GM12878 (cell line): ENCODE measurements at regions of chr6 and their contacts with region 1.

Region 1: DNA sequence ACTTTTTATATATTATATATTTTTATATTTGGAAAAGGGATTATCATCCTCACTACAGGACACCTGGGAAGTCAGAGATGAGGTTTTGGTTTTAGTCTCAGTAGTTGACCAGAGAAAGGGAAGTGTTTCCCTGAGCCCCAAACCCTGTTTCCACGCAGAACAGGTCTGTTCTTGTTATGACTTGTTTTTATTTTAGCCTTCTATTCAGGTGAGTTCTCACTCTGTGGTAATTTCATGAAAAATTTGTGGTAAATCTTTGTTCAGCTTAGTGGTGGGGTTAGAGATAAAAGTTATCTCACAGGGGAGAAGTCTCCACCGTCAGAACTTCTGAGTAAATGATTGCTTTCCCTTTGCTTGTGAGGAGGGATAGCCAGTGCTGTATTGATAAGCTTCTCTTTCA is 224.9 kb downstream of the FARS2 start:
- DNase-seq: peak; percentile 64
- ATAC-seq: peak; percentile 94
- H3K4me3 ChIP-seq: 0 out of 2 replicates have a peak overlapping the region, but pooled peaks have one; percentile 42
- H3K27ac ChIP-seq: peak overlapping the region; percentile 49
- H3K4me1 ChIP-seq: peaks cover 20% of the 10 kb centered on the region
- H3K27me3 ChIP-seq: no peaks in the 10 kb centered on the region
- CTCF ChIP-seq: no peak
- EP300 ChIP-seq: peak in 1 of 2 experiments; percentile 62; a peak in 1 of 4 replicates
- POLR2A ChIP-seq: no peak
- RAD21 ChIP-seq: 0 out of 2 replicates have a peak, but pooled peaks have one; percentile 10

Region 2: DNA sequence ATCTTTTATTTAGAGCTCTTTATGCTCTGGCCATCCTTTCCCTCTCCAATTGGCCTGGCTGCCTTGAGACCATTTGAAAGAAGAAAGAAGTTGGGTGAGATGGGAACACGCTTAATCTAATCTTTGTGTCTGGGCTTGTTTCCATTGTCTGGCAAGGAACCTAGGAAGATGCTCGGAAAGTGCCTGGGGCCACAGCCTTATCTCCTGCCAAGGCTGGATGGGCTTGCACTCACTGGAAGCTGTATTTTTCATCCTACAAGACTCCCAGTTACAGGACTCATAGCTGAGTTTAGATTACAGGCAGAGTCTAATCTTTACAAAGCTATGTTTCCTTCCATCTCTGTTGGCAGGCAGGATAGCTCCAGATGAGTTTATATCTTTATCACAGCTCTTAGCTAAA is 743.2 kb before region 1 on chr6:
- CTCF ChIA-PET with region 1: no interaction called
- POLR2A ChIA-PET with region 1: no interaction called
- RAD21 ChIA-PET with region 1: no interaction called
- SMC1A ChIA-PET with region 1: no interaction called
- in situ Hi-C with region 1: no loop called
- intact Hi-C with region 1: no loop called
- DNase-seq: no peak
- ATAC-seq: no peak
- H3K4me3 ChIP-seq: no peak overlapping the region
- H3K27ac ChIP-seq: no peak overlapping the region
- H3K4me1 ChIP-seq: no peaks in the 10 kb centered on the region
- H3K27me3 ChIP-seq: peaks cover 0 to 4% of the 10 kb centered on the region in 2 experiments; a peak in 1 of 4 replicates
- CTCF ChIP-seq: no peak
- EP300 ChIP-seq: no peak
- POLR2A ChIP-seq: no peak
- RAD21 ChIP-seq: no peak

Region 3: DNA sequence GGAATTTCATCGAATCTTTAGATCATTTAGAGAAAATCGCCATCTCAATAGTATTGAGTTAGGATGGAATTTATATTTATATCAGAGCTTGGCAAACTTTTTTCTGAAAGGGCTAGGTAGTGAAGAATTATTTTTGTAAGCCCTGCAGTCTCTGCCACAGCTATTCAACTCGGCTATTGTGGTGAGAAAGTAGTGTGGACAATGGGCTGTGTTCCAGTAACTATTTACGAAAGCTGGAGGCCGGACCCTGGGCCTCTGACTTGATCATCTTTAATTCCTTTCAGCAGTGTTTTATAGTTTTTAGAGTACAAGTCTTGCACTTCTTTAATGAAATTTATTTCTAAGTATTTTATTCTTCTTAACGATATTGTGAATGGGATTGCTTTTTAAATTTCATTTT is 23.4 kb before region 1 on chr6:
- CTCF ChIA-PET with region 1: no interaction called
- POLR2A ChIA-PET with region 1: no interaction called
- RAD21 ChIA-PET with region 1: no interaction called
- SMC1A ChIA-PET with region 1: no interaction called
- in situ Hi-C with region 1: no loop called
- intact Hi-C with region 1: no loop called
- DNase-seq: no peak
- ATAC-seq: no peak
- H3K4me3 ChIP-seq: no peak overlapping the region
- H3K27ac ChIP-seq: no peak overlapping the region
- H3K4me1 ChIP-seq: no peaks in the 10 kb centered on the region
- H3K27me3 ChIP-seq: no peaks in the 10 kb centered on the region
- CTCF ChIP-seq: no peak
- EP300 ChIP-seq: no peak
- POLR2A ChIP-seq: no peak
- RAD21 ChIP-seq: no peak

Region 4: DNA sequence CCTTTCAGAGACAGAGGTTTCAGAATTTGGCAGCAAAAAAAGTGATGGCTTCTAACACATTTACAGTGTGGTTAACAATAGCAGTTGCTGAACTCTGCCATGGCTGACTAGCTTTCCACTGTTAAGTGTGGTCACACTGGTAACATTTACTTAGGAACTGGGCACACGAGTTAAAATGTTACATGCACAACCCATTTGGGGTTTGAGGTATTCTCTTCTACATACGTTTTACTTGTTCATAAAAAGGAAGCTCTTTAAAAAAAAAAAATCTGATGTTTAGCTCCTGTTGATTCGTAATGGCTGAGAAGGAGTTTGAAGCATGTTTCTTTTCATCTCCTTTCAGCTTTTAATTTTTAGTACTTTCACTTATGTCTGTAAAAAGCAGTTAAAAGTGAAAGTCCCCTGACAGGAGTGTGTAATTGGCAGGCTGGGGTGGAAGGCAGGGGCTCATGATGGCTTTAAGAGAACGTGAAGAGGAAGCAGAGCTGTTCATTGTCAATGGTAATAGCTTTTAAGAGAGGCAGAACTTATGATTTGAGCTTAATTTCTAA is 21.0 kb after region 1 on chr6:
- CTCF ChIA-PET with region 1: interaction called, 21 read pairs
- POLR2A ChIA-PET with region 1: interaction called, 8 read pairs
- RAD21 ChIA-PET with region 1: interaction called, 27 read pairs
- SMC1A ChIA-PET with region 1: interaction called, 72 read pairs
- in situ Hi-C with region 1: no loop called
- intact Hi-C with region 1: loop called (anchors 1 kb)
- DNase-seq: peak; percentile 92
- ATAC-seq: peak; percentile 94
- H3K4me3 ChIP-seq: peak overlapping the region; percentile 60
- H3K27ac ChIP-seq: peak overlapping the region; percentile 88
- H3K4me1 ChIP-seq: peaks cover 26% of the 10 kb centered on the region
- H3K27me3 ChIP-seq: no peaks in the 10 kb centered on the region
- CTCF ChIP-seq: no peak
- EP300 ChIP-seq: peak in 1 of 2 experiments; percentile 85; a peak in 3 of 4 replicates
- POLR2A ChIP-seq: no peak
- RAD21 ChIP-seq: no peak

Region 5: GRCh38 chr6:5619249-5619648 is 133.0 kb after region 1 on chr6:
- CTCF ChIA-PET with region 1: no interaction called
- POLR2A ChIA-PET with region 1: no interaction called
- RAD21 ChIA-PET with region 1: no interaction called
- SMC1A ChIA-PET with region 1: no interaction called
- in situ Hi-C with region 1: no loop called
- intact Hi-C with region 1: no loop called
- DNase-seq: peak; percentile 17
- ATAC-seq: peak; percentile 78
- H3K4me3 ChIP-seq: no peak overlapping the region
- H3K27ac ChIP-seq: peak overlapping the region; percentile 27; the same call in 1 of the 2 replicates
- H3K4me1 ChIP-seq: peaks cover 4% of the 10 kb centered on the region; the same call in 1 of the 2 replicates
- H3K27me3 ChIP-seq: no peaks in the 10 kb centered on the region
- CTCF ChIP-seq: no peak
- EP300 ChIP-seq: no peak
- POLR2A ChIP-seq: peak; percentile 67; the same call in 1 of the 2 replicates
- RAD21 ChIP-seq: no peak

Region 6: DNA sequence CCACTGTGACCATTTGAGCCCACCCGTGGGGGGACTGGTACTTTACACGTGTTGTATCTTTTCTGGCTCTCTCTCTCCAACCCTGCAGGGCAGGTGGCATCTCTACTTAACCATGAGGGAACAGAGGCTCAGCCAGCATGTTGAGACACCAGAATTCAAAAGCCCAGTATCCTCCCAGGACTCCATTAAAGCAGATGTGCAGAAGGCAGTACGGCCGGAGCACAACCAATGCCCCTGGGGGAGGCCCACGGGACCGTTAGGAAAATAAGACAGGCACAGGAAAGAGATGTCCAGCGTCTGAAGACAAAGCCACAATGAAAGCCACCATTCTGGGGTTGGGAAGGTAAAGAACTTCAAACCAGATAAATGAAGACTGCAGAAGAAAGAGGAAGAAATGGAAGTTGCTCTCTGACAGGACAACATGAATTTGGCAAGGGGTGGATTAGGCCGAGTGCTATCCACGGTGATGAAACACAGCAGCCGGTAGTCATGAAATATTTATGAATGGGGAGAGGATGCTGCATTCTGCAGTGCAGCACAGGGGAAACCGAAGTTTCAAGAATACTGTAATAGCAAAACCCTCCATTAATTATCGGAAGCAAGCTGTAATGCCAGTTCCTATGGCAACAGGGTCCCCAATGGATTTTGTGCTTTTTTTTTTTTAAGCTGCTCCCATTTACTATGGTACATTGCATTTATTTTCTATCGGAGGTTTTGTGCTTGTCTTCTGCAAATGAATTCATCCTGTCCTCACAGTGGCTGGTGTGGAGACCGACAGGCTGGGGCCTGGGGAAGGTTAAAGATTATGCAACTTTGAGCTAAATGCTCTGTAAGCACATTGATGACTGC is 341.1 kb after region 1 on chr6:
- CTCF ChIA-PET with region 1: no interaction called
- POLR2A ChIA-PET with region 1: no interaction called
- RAD21 ChIA-PET with region 1: no interaction called
- SMC1A ChIA-PET with region 1: no interaction called
- in situ Hi-C with region 1: no loop called
- intact Hi-C with region 1: no loop called
- DNase-seq: no peak
- ATAC-seq: no peak
- H3K4me3 ChIP-seq: no peak overlapping the region
- H3K27ac ChIP-seq: no peak overlapping the region
- H3K4me1 ChIP-seq: peaks cover 7% of the 10 kb centered on the region
- H3K27me3 ChIP-seq: no peaks in the 10 kb centered on the region; a peak in 1 of 4 replicates
- CTCF ChIP-seq: no peak
- EP300 ChIP-seq: no peak
- POLR2A ChIP-seq: no peak
- RAD21 ChIP-seq: no peak